ENCODE measurements at regions of chr22 and their contacts with region 1.

Region 1: DNA sequence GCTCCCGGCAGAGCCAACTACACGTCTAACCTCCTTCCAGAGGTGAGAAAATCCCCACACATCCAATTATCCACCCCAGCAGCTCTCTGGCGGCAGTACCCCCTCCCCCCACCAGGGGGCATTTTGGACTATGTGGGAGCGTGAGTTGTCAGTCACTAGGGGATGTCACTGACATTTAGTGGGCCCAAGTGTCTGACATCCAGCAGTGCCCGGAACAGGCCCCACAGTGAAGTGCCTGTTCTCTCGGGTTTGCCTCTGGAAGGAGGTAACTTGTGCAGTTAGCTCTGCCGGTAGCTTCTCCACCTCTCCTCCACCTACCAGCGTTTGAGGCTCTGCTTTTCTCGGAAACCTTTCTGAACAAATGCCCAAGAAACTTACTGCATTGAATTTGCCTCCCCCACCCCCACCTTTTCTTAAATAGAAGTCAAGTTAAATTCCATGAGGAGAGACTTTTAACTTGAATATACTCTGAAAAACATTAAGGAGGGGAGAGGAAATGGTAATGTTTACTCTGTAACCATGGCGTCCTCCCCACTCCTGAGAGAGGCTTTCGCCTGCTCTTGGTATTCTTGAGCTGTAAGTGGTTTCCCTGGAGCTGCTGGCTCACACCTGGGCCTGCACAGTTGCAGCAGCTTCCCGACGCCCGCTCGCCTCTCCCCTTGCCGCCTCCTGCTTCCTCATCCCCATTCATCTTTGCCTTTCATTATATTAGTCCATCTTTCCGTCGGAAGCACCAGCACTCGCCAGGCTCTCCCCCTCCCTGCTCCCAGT is 112.8 kb downstream of the WNT7B start:
- DNase-seq: peak; percentile 76 to 88 (median 86)
- H3K4me3 ChIP-seq: peak overlapping the region in 1 of 7 experiments; percentile 48
- H3K27ac ChIP-seq: no peak overlapping the region
- H3K4me1 ChIP-seq: peaks cover 0 to 39% (median 21%) of the 10 kb centered on the region in 4 experiments
- H3K27me3 ChIP-seq: peaks cover 0 to 72% (median 21%) of the 10 kb centered on the region in 5 experiments

Region 2: GRCh38 chr22:45645526-45646414 is 218.4 kb before region 1 on chr22:
- CTCF ChIA-PET with region 1: interaction called, 14 read pairs
- POLR2A ChIA-PET with region 1: no interaction called
- DNase-seq: peak; percentile 50 to 68 (median 62)
- H3K4me3 ChIP-seq: peak overlapping the region in 3 of 7 experiments; percentile 28 to 50 (median 36)
- H3K27ac ChIP-seq: no peak overlapping the region
- H3K4me1 ChIP-seq: peaks cover 0 to 40% (median 31%) of the 10 kb centered on the region in 4 experiments
- H3K27me3 ChIP-seq: peaks cover 0 to 36% (median 2%) of the 10 kb centered on the region in 5 experiments

Region 3: GRCh38 chr22:45842291-45842991 is 21.7 kb before region 1 on chr22:
- CTCF ChIA-PET with region 1: interaction called, 12 read pairs
- POLR2A ChIA-PET with region 1: no interaction called
- DNase-seq: no peak
- H3K4me3 ChIP-seq: no peak overlapping the region
- H3K27ac ChIP-seq: no peak overlapping the region
- H3K4me1 ChIP-seq: peaks cover 0 to 6% (median 3%) of the 10 kb centered on the region in 4 experiments
- H3K27me3 ChIP-seq: no peaks in the 10 kb centered on the region

Region 4: GRCh38 chr22:45852826-45853225 is 11.3 kb before region 1 on chr22:
- CTCF ChIA-PET with region 1: interaction called, 11 read pairs
- POLR2A ChIA-PET with region 1: no interaction called
- DNase-seq: peak in 2 of 3 donors; percentile 44 to 52
- H3K4me3 ChIP-seq: no peak overlapping the region
- H3K27ac ChIP-seq: no peak overlapping the region
- H3K4me1 ChIP-seq: no peaks in the 10 kb centered on the region
- H3K27me3 ChIP-seq: no peaks in the 10 kb centered on the region

Region 5: GRCh38 chr22:45878051-45878781 is 14.1 kb after region 1 on chr22:
- CTCF ChIA-PET with region 1: interaction called, 11 read pairs
- POLR2A ChIA-PET with region 1: interaction called, 3 read pairs
- DNase-seq: no peak
- H3K4me3 ChIP-seq: no peak overlapping the region
- H3K27ac ChIP-seq: no peak overlapping the region
- H3K4me1 ChIP-seq: peaks cover 0 to 11% (median 3%) of the 10 kb centered on the region in 4 experiments
- H3K27me3 ChIP-seq: peaks cover 0 to 84% (median 29%) of the 10 kb centered on the region in 5 experiments

Region 6: DNA sequence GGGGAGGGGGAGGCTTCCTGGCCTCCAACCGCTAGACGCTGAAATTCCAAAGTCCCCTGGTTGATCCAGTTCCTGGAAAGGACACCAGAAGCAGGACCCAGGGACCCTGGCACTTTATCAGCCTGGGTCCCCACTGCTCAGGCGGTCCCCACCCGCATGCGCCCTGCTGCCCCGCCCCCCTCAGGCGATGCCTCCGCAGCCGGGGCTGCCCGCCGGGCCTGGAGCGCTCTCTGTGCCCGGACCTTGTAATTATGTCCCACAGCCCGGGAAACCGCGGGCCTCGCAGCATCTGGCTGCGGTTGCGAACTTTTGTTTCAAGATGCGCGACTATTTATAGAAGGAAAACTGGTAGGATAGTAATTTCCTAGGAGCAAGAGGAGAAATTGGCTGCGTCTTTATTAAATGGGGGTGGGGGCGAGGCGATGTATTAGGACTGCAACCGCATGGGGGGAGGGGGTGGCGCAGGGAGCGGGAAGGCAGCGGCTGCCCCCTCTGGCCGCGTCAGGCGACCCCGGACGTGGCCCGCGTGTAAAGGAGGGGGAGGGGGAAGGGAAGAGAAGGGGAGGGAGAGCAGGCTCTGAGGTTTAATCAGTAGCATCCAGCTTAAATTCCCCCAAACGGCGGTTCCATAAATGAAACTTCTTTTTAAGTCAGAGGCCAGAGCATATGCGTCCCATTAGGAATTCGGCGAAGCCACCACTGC is 106.7 kb after region 1 on chr22:
- CTCF ChIA-PET with region 1: interaction called, 24 read pairs
- POLR2A ChIA-PET with region 1: no interaction called
- DNase-seq: peak; percentile 25 to 72 (median 71)
- H3K4me3 ChIP-seq: peak overlapping the region in 4 of 7 experiments; percentile 3 to 63 (median 43)
- H3K27ac ChIP-seq: no peak overlapping the region
- H3K4me1 ChIP-seq: peaks cover 0 to 44% (median 27%) of the 10 kb centered on the region in 4 experiments
- H3K27me3 ChIP-seq: peaks cover 0 to 97% (median 47%) of the 10 kb centered on the region in 5 experiments

Measured in common myeloid progenitor, CD34-positive (primary cell).